Activated T-helper 1 cell treated with anti-CD3 and anti-CD28 coated beads, Interleukin-12 subunit alpha, Interleukin-12 subunit beta, Interleukin-2, Interleukin-4 antibody, amounts not matched to agents 30 ng/mL and 10 ng/mL and 1 ng/mL, durations not matched to agents 14 hours and 24 hours and 36 hours (primary cell): ENCODE measurements at regions of chr10 and their contacts with region 1.

Region 1: DNA sequence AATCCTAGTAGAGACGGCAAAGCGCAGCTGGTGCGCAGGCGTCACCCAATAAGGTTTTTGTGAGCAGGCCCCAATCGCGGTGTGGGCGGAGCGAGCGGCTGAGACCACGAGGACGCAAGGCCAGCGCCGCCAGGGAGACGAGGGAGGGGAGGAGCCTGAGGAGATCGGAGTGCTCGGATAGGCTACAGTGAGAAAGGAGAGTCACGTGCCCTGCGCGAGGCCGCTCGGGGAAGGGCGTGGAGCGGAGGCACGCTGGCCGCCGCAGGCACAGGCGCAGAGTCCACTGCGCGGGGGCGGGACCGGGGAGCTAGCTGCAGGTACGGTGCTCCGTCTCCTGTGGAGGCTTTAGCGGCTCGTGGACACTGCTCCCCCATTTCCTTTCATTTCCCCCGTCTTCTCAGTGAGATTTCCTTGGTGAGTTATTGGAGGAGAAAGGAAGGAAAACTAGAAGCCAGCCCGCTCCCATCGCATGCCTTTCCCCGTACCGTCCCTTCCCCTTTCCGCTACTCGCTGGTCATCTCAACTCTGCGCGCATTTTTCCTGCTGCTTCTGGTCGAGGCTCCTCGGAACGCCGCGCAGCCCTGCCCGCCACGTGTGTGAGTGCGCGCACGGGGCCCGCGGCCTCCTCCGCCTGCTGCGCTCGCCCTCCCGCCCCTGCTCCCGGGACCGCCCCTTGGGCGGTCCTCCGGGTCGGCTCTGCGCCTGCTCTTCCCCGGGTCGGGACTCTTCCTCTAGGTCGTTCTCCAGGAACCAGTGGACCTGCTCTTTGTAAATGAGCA is at the start of gene THNSL1:
- DNase-seq: peak; percentile 97
- H3K4me3 Mint-ChIP-seq: peak within 1 kb of the TSS; percentile 89
- H3K27ac Mint-ChIP-seq: peak within 1 kb of the TSS; percentile 95
- H3K4me1 Mint-ChIP-seq: peaks cover 16% of the 10 kb centered on the region
- H3K27me3 Mint-ChIP-seq: peaks cover 2% of the 10 kb centered on the region
- total RNA-seq, gene THNSL1: 3.0 and 3.1 TPM in 2 replicates

Region 2: GRCh38 chr10:23438550-23439441 is 1577.8 kb before region 1 on chr10 and contains the start of gene OTUD1:
- intact Hi-C with region 1: loop called (anchors 5 kb)
- DNase-seq: peak; percentile 94
- H3K4me3 Mint-ChIP-seq: peak within 1 kb of the TSS; percentile 83
- H3K27ac Mint-ChIP-seq: peak within 1 kb of the TSS; percentile 84
- H3K4me1 Mint-ChIP-seq: peaks cover 47% of the 10 kb centered on the region
- H3K27me3 Mint-ChIP-seq: peaks cover 5% of the 10 kb centered on the region
- total RNA-seq, gene OTUD1: 19.1 and 20.3 TPM in 2 replicates

Region 3: DNA sequence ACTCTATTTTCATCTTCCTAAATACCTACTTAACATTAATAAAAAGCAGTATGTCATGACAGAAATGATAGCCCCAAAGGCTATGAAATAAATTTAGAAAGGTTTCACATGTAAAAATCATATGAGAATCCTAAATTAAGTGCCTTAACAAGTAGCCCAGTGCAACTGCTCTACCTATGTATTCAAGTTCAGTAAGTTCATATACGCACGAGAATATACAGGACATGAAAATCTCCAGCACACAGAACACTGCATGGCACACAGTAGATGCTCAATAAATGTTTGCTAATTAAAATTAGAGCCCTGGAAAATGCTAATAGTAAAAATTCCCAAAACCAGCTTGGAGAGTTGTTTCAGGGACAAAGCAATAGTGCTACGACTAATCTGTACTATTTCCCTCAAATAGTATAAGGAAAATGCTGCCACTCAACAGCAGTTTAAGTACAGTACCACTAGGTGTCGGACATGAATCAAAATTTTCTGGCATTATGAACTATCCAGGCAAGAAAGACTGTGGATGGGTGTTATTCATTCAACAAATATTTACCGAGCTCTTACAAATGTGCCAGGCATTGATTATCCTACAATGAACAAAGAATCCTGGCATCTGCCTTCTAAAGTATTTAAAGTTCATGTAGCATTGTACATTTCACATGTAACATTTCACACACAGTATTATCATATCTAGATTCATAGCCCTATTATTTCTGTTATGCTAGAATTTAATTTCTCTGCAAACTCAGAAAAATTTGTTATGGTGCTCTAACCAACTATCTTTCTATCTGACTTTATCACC is 373.7 kb before region 1 on chr10:
- intact Hi-C with region 1: loop called (anchors 1 kb)
- DNase-seq: no peak
- H3K4me3 Mint-ChIP-seq: no peak overlapping the region
- H3K27ac Mint-ChIP-seq: no peak overlapping the region
- H3K4me1 Mint-ChIP-seq: no peaks in the 10 kb centered on the region
- H3K27me3 Mint-ChIP-seq: no peaks in the 10 kb centered on the region

Region 4: GRCh38 chr10:24822590-24822989 is 194.0 kb before region 1 on chr10:
- intact Hi-C with region 1: loop called (anchors 1 kb)
- DNase-seq: no peak
- H3K4me3 Mint-ChIP-seq: no peak overlapping the region
- H3K27ac Mint-ChIP-seq: no peak overlapping the region
- H3K4me1 Mint-ChIP-seq: peaks cover 40% of the 10 kb centered on the region
- H3K27me3 Mint-ChIP-seq: peaks cover 2% of the 10 kb centered on the region

Region 5: DNA sequence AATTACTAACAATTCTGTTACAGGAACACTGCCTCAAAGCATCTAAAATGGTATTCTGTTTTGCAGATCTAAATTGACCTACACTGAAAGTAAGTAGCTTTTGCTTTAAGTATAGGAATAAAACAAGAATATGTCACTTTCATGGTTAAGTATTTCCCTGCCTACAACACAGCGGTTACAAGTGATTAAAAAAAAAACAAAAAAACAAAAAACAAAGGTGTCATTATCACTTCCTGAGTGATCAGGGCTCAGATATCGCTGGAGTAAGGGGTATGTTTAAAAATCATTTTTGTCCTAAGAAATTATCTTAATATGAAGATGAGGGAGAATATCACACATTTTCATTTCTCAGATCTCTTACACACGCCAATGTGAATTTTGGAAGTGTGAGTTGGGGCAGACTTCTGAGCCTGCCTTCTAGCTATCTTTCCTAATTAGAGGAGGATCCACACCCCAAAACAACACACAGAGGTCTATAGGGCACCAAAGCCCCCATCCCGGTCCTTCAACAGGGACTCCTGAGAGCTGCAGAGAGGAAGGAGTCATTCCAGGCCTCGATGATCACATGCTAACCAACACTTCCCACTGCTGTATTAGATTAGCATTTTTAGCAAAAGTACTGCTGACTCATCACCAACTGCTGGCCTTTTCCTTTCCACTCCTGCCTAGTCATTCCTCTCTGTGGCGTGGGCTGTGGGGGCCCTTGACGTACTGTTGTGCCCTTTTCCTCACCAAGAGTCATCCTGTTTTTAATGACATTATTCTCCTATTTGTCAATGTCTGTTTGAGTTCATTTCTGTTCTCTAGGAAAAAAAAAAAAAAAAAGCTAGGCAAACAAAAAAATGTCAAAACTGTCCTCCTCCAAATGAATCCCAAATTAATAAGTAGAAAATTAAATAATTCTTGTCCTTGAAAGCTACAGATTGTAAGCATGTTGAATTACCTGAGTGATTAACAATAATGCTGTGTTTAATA is 95.4 kb before region 1 on chr10:
- intact Hi-C with region 1: loop called (anchors 1 kb)
- DNase-seq: peak; percentile 33
- H3K4me3 Mint-ChIP-seq: peak overlapping the region; percentile 53
- H3K27ac Mint-ChIP-seq: peak overlapping the region; percentile 92
- H3K4me1 Mint-ChIP-seq: peaks cover 30% of the 10 kb centered on the region
- H3K27me3 Mint-ChIP-seq: no peaks in the 10 kb centered on the region

Region 6: GRCh38 chr10:25080880-25081581 is 64.5 kb after region 1 on chr10:
- intact Hi-C with region 1: loop called (anchors 2 kb)
- DNase-seq: peak; percentile 45
- H3K4me3 Mint-ChIP-seq: no peak overlapping the region
- H3K27ac Mint-ChIP-seq: no peak overlapping the region
- H3K4me1 Mint-ChIP-seq: peaks cover 15% of the 10 kb centered on the region
- H3K27me3 Mint-ChIP-seq: peaks cover 20% of the 10 kb centered on the region

Region 7: DNA sequence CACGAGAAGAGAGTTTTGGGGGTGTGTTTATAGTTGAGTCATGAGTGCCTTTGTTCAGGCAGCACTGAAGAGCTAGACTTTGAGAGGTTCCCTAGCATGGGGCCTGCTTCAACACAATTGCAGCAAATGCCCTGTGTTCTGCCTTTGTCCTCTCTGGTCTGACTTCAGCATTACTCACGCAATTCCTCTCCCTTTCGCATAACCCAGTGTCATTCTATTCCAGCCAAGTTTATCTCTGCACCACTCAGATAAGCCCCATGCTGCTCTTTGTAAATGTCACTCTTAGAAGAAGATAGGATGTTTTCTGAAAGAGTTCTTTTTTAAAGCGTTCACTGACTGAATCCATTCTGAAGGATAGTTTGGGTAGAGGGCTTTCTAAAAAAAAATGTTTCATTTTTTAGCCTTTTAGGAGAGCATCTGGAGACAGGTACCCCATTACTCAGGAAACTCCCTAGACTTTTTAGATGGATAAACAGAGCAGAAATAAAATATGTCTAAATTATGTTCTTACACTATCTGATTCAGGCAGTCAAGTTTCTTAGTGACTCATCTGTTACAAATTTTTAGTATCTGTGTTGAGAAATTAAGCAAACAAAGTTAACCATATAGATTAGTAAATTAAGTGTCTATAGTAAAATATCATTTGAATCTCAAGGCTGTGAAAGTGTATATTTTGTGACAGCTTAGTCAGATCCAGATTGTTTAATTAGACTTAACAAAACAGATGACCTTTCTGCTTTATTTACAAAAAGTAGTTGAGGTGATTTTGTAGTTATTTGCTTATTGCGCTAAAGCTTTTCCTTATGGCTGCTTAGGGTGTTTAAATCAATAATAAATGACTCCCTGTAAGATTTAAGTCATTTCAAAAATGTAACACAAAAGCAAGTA is 476.8 kb after region 1 on chr10:
- intact Hi-C with region 1: no loop called
- DNase-seq: no peak
- H3K4me3 Mint-ChIP-seq: no peak overlapping the region
- H3K27ac Mint-ChIP-seq: no peak overlapping the region
- H3K4me1 Mint-ChIP-seq: no peaks in the 10 kb centered on the region
- H3K27me3 Mint-ChIP-seq: no peaks in the 10 kb centered on the region